GM10248 (cell line): ENCODE measurements at regions of chr7 and their contacts with region 1.

Region 1: DNA sequence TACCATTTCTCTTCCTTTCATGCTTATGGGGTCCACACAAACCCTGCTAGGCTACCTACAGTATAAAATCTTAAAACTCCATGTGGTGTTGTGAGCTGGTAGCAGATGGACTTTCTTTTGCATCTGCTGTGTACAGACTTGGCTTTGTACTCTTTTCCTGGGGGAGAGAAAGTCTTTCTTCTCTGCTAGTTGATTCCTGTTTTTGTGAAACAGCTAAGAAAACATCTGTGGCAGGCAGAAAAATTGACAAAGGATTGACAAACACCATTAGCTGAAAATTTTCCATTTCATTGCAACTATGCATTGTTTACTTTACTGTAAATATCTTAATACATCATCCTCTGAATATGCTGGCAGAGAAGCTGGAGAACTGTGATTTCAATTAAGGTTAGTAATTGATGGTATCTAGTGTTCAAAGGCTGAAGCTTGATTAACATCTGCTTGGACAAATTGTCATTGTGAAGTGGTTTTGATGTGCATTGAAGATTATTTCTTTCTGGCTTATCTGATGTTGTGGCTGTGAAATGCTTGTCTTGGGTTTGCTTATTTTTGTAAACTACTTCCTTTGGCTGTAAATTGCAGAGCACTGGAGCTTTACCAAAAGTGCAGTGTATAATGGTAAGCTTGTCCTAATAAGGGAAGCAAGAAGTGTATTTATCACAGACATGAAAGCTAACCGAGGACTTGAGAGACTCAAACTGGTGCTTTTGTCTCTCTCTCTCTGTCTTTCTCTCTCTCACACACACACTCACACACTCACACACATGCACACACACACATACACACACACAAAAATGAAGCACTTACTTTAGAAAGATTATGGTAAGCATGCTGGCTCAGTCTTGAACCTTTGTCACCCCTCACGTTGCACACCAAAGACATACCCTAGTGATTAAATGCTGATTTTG is at the start of gene FOXP2:
- DNase-seq: no peak
- CTCF ChIP-seq: no peak

Region 2: DNA sequence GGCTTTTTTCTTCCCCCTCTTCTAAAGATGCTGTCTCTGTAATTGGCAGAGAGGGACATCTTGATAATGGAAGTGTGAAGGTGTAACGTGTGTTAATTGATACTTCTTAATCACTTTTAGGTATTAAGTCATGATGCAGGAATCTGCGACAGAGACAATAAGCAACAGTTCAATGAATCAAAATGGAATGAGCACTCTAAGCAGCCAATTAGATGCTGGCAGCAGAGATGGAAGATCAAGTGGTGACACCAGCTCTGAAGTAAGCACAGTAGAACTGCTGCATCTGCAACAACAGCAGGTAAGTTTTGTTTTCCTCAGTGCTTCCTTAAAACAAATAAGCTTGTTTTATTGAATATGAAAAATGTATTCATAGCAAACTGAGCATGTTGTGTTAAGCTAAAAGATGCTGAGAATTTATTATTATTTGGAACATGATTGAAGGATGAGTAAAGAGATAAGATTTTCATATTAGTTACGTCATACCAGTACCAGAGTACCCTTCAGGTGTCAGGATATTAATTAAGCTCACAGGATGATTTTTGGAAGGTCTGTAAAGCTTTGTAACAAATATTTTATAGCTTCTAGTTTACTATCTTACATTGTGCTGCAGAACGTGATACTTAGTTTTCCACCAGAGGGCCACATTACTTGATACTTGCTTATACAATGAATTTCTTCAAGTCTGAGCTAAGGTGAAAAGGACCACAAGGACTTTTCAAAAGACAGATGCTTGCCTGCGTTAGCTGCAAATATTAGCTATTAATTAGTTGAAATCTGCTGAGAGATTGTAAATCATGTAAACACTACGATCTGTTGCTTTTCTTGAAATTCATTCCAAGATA is 12.2 kb after region 1 on chr7:
- CTCF ChIA-PET with region 1: interaction called, 27 read pairs
- POLR2A ChIA-PET with region 1: no interaction called
- DNase-seq: no peak
- CTCF ChIP-seq: no peak